ENCODE measurements at regions of chr9 and their contacts with region 1.

Region 1: DNA sequence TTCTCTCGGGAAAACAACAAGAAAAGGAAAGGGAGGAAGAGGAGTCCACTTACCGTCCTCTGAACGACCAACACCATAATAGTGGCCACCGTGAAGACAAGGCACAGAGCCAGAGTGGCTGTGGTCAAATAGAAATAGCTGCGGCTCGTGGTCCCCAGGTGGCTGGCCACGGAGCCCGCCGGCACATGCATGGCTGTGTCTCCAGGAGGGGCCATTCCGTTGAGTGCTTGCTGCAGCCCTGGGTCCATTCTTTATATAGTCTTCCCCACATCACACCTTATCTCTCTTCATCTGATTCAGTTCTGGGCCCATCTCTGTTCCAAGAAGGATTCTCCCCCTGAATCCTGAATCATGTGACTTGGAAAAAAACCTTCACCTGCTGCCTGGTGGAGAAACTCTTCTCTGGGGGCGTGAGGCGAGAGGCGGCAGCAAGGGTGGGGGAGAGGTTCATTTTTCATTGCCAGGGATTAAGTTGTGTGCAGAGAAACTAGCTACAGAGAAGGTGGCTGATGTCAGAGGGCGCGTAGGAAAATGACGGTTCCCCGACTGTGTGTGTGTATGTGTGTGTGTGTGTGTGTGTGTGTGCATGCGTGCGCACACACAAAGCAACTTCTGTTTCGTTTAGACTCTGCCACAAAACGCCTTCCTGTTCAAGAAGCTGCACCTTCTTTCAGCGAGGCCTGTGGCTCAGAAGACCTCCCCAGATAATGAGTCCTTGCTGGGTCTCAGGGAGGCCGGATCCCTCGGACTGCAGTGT is at the start of gene TNFSF8:
- DNase-seq: peak in 1 of 6 donors; percentile 20
- ATAC-seq: peak in 2 of 4 donors; percentile 74 to 75
- H3K4me3 ChIP-seq: peak within 1 kb of the TSS in 1 of 4 donors; percentile 4
- H3K27ac ChIP-seq: peak within 1 kb of the TSS in 2 of 4 donors; percentile 0 to 51
- H3K4me1 ChIP-seq: no peaks in the 10 kb centered on the region
- H3K27me3 ChIP-seq: peaks cover 0 to 7% (median 0%) of the 10 kb centered on the region in 4 donors
- CTCF ChIP-seq: no peak
- total RNA-seq, gene TNFSF8: 0.12 to 1.0 (median 0.50) TPM

Region 2: GRCh38 chr9:114697951-114698351 is 232.3 kb before region 1 on chr9:
- intact Hi-C with region 1: no loop called
- DNase-seq: no peak
- ATAC-seq: no peak
- H3K4me3 ChIP-seq: no peak overlapping the region
- H3K27ac ChIP-seq: no peak overlapping the region
- H3K4me1 ChIP-seq: no peaks in the 10 kb centered on the region
- H3K27me3 ChIP-seq: no peaks in the 10 kb centered on the region
- CTCF ChIP-seq: no peak

Region 3: DNA sequence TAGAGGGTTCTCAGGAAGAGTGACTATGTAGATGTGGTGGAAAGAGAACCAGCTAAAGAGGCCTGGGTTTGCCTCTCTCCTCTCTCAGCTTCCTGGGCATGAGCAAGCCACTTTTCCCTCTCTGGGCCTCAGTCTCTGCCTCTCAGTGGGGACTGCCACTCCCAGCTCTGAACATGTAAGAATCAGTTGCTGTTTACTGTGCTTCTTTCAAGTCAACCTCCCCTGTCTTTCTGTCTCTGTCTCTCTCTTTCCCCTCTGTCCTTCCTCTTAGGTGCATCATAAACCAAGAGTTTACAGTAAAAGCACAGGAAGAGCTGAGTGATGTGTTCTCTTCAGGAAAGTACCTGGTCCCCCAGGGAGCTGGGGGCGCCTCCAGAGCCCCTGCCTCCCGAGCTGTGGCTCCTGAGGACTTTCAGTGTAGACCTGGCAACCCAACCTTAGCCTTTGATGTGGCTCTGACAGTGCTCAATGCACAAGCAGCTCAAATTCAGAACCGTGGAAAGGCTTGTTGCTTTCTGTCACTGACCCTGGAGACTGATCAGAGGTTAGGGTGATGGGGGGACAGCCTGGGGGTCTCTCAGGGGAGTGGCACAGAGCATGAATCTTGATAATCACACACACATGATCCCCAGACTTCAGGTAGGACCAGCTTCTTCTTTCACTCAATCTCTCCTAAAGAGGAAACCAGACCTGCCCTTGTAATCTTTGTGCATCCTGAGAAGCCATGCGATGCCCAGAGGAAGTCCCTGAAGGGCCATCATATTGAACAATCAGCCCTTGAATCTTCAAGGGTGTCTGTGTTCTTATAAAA is 59.6 kb after region 1 on chr9:
- intact Hi-C with region 1: loop called in 1 of 3 experiments (anchors 10 kb)
- DNase-seq: no peak
- ATAC-seq: no peak
- H3K4me3 ChIP-seq: no peak overlapping the region
- H3K27ac ChIP-seq: no peak overlapping the region
- H3K4me1 ChIP-seq: no peaks in the 10 kb centered on the region
- H3K27me3 ChIP-seq: no peaks in the 10 kb centered on the region
- CTCF ChIP-seq: no peak